Activated CD4-positive, alpha-beta memory T cell treated with anti-CD3 and anti-CD28 coated beads for 36 hours (primary cell): ENCODE measurements at regions of chr19 and their contacts with region 1.

Region 1: DNA sequence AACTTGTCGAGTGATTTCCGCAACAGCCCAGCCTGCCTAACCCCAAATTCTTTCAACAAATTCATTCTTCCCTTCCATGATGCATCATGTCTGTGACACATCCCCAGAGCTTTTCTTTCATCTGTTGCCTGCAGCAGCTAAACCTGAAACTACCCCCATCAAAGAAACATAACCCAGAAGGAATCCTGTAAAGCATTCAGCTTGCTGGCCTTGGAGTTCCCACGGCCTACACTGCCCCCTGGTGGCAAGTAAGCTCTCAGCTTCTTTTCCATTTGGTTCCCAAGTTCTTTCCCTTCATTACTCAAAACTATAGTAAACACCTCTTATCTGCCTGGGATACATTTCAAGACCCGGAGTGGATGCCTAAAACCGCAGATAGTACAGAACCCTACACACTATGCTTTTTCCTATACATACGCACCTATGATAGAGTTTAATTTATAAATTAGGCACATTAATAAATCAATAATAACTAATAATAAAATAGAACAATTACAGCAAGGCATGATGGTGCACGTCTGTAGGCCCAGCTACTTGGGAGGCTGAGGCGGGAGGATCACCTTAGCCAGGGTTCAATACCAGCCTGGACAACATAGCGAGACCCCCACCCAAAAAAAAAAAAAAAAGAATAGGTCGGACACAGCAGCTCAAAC is 7.4 kb downstream of the ETHE1 start:
- DNase-seq: peak; percentile 86
- H3K4me3 Mint-ChIP-seq: no peak overlapping the region
- H3K27ac Mint-ChIP-seq: peak overlapping the region; percentile 64
- H3K4me1 Mint-ChIP-seq: peaks cover 20% of the 10 kb centered on the region
- H3K27me3 Mint-ChIP-seq: no peaks in the 10 kb centered on the region

Region 2: DNA sequence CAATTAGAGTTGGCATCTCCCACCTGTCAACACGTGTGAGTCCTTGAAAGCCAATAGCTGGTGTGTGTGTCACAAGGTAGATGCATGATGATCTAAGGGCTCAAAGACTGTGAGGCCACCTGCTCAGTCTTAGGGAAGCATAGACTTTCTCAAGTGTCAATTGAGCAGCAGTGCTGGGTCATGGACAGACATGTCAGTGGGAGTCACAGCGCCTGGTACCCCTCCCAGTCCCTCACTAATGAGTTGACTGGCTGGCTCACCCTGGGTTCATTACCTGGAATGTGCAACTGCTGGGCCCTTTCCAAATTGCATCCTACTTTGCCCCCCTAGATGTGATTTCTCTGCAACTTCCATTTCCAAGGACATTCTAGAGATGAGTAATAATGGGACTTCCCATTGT is 592.8 kb before region 1 on chr19:
- CTCF ChIA-PET with region 1: no interaction called
- POLR2A ChIA-PET with region 1: no interaction called
- intact Hi-C with region 1: no loop called
- DNase-seq: no peak
- H3K4me3 Mint-ChIP-seq: no peak overlapping the region
- H3K27ac Mint-ChIP-seq: no peak overlapping the region
- H3K4me1 Mint-ChIP-seq: no peaks in the 10 kb centered on the region
- H3K27me3 Mint-ChIP-seq: peaks cover 12% of the 10 kb centered on the region

Region 3: GRCh38 chr19:43433358-43433673 is 86.2 kb before region 1 on chr19:
- CTCF ChIA-PET with region 1: interaction called, 68 read pairs
- POLR2A ChIA-PET with region 1: no interaction called
- intact Hi-C with region 1: loop called (anchors 2 kb)
- DNase-seq: no peak
- H3K4me3 Mint-ChIP-seq: no peak overlapping the region
- H3K27ac Mint-ChIP-seq: no peak overlapping the region
- H3K4me1 Mint-ChIP-seq: peaks cover 37% of the 10 kb centered on the region
- H3K27me3 Mint-ChIP-seq: no peaks in the 10 kb centered on the region

Region 4: GRCh38 chr19:43446746-43447489 is 72.6 kb before region 1 on chr19:
- CTCF ChIA-PET with region 1: interaction called, 320 read pairs
- POLR2A ChIA-PET with region 1: interaction called, 12 read pairs
- intact Hi-C with region 1: loop called (anchors 1 kb)
- DNase-seq: peak; percentile 87
- H3K4me3 Mint-ChIP-seq: no peak overlapping the region
- H3K27ac Mint-ChIP-seq: no peak overlapping the region
- H3K4me1 Mint-ChIP-seq: peaks cover 16% of the 10 kb centered on the region
- H3K27me3 Mint-ChIP-seq: no peaks in the 10 kb centered on the region

Region 5: DNA sequence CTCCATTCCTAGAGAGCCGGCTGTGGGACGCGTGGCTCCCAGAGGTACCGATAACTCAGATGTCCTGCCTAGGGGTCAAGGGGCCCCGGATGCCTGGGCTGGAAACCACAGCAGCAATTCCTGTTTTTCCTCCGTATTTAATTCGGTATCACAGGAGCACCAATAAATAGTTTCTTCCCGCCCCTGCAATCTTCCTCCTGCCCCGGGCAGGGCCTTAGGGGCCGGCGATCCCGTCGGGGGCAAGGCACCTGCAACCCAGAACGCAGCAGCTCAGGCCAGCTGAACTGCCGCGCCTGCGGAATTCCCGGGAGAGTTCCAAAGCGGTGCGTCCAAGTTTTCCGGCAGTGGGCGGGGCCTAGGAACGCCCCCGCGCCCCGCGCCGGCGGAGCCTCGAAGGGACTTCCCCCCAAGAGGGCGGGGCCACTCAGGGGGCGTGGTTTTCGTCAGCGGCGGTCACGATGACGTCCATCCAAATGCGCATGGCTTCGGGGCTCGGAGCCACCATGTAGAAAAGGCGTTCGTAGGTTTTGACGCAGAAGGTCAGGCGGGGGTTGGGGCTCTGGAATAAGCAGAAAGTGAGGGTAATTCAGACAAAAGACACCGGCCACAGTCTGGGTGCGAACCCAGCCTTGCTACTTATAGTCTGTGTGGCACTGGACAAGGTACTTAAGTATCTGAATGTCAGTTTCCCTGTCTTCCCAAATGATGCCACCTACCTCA is 44.4 kb before region 1 on chr19:
- CTCF ChIA-PET with region 1: interaction called, 11 read pairs
- POLR2A ChIA-PET with region 1: no interaction called
- intact Hi-C with region 1: no loop called
- DNase-seq: peak; percentile 96
- H3K4me3 Mint-ChIP-seq: peak overlapping the region; percentile 70
- H3K27ac Mint-ChIP-seq: peak overlapping the region; percentile 85
- H3K4me1 Mint-ChIP-seq: peaks cover 15% of the 10 kb centered on the region
- H3K27me3 Mint-ChIP-seq: no peaks in the 10 kb centered on the region

Region 6: DNA sequence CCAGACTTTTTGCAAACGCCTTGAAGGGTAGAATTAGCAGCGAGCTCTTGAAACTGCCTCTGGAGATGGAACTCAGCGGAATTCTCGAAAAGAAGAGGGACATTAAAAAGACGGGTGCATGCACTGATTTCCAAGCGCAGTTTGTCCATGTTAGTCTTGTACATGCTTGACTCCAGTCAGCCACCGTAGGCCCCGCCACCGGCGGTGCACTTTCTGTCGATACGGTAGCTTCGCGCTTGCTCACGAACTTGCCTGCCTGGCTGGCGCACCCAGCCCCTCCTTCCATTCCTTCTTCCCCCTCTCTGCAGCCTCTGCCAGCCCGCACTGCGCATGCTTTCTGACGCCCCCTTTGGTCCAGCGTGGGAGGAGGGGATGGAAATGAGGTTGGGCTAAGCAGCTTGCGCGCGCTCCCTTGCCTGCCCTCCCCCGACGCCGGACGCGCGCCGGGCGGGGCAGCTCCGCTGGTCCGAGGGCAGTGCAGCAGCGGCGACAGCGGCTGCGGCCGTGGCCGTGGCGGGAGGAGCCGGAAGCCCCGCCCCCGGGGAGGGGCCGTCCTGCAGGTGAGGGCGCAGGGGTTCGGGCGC is 13.5 kb after region 1 on chr19 and contains the start of gene ZNF575:
- CTCF ChIA-PET with region 1: interaction called, 33 read pairs
- POLR2A ChIA-PET with region 1: interaction called, 6 read pairs
- intact Hi-C with region 1: no loop called
- DNase-seq: peak; percentile 95
- H3K4me3 Mint-ChIP-seq: peak within 1 kb of the TSS; percentile 82
- H3K27ac Mint-ChIP-seq: peak within 1 kb of the TSS; percentile 94
- H3K4me1 Mint-ChIP-seq: peaks cover 21% of the 10 kb centered on the region
- H3K27me3 Mint-ChIP-seq: no peaks in the 10 kb centered on the region
- total RNA-seq, gene ZNF575: 3.1 to 3.7 TPM

Region 7: GRCh38 chr19:43619262-43620060 is 99.9 kb after region 1 on chr19 and contains the start of gene ZNF428:
- CTCF ChIA-PET with region 1: no interaction called
- POLR2A ChIA-PET with region 1: no interaction called
- intact Hi-C with region 1: no loop called
- DNase-seq: peak; percentile 92
- H3K4me3 Mint-ChIP-seq: peak within 1 kb of the TSS; percentile 97
- H3K27ac Mint-ChIP-seq: peak within 1 kb of the TSS; percentile 98
- H3K4me1 Mint-ChIP-seq: peaks cover 14% of the 10 kb centered on the region
- H3K27me3 Mint-ChIP-seq: no peaks in the 10 kb centered on the region
- total RNA-seq, gene ZNF428: 11.7 to 12.5 TPM